ENCODE measurements at regions of chr22 and their contacts with region 1.

Region 1: GRCh38 chr22:40177738-40178416 is at the start of gene TNRC6B:
- DNase-seq: peak; percentile 98
- H3K4me3 ChIP-seq: peak within 1 kb of the TSS; percentile 61
- H3K27ac ChIP-seq: peak within 1 kb of the TSS; percentile 93
- H3K4me1 ChIP-seq: peaks cover 28% of the 10 kb centered on the region
- H3K27me3 ChIP-seq: no peaks in the 10 kb centered on the region
- CTCF ChIP-seq: no peak
- total RNA-seq, gene TNRC6B: 52.2 and 56.6 TPM in 2 replicates

Region 2: DNA sequence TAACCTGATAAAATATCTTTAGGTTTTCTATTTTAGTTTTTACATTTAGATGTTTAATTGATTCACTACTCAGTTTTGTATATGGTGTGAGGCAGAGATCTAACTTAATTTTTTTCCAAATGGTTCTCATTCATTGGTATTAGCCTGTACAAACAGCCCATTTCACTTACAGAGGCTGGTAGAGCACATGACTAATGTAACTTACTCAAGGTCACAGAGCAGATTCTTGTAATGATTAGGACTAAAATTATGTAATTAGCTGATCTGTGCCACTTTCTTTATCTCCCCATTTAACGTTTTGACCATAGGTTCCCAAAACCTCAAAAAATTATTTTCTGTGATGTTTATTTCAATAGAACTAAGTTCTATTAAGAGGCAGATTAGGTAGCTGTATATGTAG is 16.7 kb before region 1 on chr22:
- CTCF ChIA-PET with region 1: no interaction called
- POLR2A ChIA-PET with region 1: interaction called, 20 read pairs
- intact Hi-C with region 1: no loop called
- DNase-seq: no peak
- H3K4me3 ChIP-seq: no peak overlapping the region
- H3K27ac ChIP-seq: no peak overlapping the region
- H3K4me1 ChIP-seq: no peaks in the 10 kb centered on the region
- H3K27me3 ChIP-seq: no peaks in the 10 kb centered on the region
- CTCF ChIP-seq: no peak